ENCODE measurements at regions of chr3 and their contacts with region 1.

Region 1: GRCh38 chr3:22565393-22565792 is 637.7 kb upstream of the UBE2E2 start:
- DNase-seq: no peak
- ATAC-seq: no peak
- H3K4me3 ChIP-seq: no peak overlapping the region
- H3K27ac ChIP-seq: no peak overlapping the region
- H3K4me1 ChIP-seq: no peaks in the 10 kb centered on the region
- H3K27me3 ChIP-seq: no peaks in the 10 kb centered on the region
- CTCF ChIP-seq: no peak
- POLR2A ChIP-seq: no peak

Region 2: DNA sequence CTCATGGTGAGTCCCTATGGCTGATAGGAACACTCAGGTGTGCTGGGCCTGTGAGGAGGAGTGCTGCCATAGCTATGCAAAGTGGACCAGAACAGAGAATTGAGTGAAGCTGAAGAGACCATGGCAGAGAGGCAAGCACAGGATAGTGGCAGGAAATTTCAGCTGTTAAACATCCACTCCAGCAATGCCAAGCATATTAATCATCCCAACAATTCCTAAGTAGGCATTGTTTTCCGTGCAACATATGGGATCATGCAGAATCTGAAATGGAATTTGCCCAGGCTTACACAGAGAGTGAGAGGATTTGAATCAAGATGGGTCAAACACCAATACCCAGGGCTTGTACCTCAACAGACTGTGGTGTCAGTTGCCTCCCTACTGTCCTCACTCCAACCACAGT is 55.1 kb after region 1 on chr3:
- intact Hi-C with region 1: no loop called
- DNase-seq: no peak
- ATAC-seq: no peak
- H3K4me3 ChIP-seq: no peak overlapping the region
- H3K27ac ChIP-seq: no peak overlapping the region
- H3K4me1 ChIP-seq: no peaks in the 10 kb centered on the region
- H3K27me3 ChIP-seq: peaks cover 0 to 3% of the 10 kb centered on the region in 2 donors
- CTCF ChIP-seq: no peak
- POLR2A ChIP-seq: no peak

Region 3: DNA sequence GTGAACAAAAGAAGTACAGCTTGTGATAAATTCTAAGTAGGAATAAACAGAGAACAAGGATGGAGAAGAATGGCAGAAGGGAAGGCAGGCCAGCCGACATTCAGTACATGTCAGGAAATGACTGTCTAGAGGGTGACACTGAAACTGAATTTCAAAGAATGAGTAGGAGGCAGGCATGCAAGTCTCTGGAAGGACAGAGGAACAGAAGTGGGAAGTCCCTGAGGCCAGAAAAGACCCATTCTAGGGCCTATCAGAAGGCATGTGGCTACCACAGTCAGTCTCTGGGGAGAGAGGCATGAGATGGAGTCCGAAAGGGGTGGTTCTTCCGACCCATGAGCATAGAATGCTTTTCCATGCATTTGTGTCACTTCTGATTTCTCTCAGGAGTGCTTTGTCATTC is 394.2 kb after region 1 on chr3:
- intact Hi-C with region 1: loop called in 1 of 2 experiments (anchors 10 kb)
- DNase-seq: no peak
- ATAC-seq: no peak
- H3K4me3 ChIP-seq: no peak overlapping the region
- H3K27ac ChIP-seq: no peak overlapping the region
- H3K4me1 ChIP-seq: no peaks in the 10 kb centered on the region
- H3K27me3 ChIP-seq: no peaks in the 10 kb centered on the region
- CTCF ChIP-seq: no peak
- POLR2A ChIP-seq: no peak